ENCODE measurements at regions of chr22 and their contacts with region 1.

Region 1: DNA sequence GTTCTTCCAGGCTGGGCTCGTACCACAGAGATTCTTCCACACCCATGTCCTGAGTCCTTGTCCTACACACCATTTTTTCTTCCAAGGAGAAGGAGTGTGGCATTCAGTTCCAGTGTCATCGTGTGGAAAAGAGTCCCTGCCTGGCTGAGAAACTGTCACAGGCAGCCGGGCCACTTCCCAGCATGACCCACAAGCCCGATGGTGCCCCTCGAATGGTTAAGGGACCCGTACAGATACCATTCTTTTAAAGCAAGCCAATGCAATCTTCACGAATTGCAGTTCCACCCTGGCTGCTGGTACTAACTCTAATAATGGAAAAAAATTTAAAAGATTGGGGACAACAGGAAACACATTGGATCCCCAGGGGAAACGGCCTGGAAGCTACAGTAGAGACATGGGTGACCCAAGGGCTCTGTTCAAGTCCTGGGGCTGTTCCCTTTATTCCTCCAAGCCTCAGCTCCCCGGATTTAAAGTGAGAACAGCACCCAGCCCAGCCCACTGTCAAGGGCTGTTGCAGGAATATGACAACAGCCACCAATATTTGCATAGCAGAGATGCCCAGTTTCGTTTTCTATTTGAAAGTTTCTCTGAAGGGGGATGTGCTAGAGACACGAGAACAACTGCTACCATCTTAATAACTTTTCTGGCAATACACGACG is 80.9 kb upstream of the WNT7B start:
- DNase-seq: peak; percentile 87
- H3K4me3 Mint-ChIP-seq: peak overlapping the region; percentile 57
- H3K27ac Mint-ChIP-seq: peak overlapping the region; percentile 73
- H3K4me1 Mint-ChIP-seq: peaks cover 30% of the 10 kb centered on the region
- H3K27me3 Mint-ChIP-seq: no peaks in the 10 kb centered on the region

Region 2: DNA sequence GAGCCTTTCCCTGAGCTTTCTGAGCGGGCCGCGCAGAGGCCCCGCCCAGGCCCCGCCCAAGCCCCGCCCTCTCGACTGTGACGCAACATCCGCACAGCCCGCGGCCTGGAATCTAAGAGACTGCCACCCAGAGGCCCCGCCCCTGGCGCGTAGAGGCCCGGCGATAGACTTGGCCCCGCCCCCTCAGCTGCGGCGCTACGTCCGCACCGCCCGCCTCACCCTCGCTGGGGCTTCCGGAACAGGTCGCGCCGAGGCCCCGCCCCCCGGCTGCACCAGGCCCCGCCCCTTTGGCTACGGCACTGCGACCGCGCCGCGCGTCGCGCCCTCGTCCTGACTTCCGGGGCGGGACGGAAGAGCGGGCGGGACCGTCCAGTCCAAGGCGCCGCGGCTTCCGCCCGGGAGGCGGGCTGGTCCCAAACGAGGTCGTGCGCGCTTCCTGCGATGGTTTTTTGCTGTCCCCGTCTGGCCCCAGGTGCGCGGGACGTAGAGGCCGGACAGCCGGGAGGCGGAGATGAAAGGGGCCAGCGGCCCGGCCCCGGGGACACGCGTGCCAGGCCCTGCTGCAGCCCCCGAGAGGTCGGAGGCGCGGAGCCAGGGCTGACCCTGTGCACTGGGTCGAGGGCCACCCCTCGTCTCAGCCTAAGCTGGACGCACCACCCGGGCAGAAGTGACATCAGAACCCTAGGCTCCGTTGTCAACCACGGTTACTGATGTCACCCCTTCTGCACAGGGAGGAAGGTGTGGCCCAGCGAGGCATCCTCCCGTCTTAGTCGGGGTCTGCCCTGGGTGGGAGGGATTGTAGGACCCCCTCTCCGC is 21.9 kb before region 1 on chr22:
- intact Hi-C with region 1: loop called (anchors 2 kb)
- DNase-seq: peak; percentile 100
- H3K4me3 Mint-ChIP-seq: peak overlapping the region; percentile 84
- H3K27ac Mint-ChIP-seq: peak overlapping the region; percentile 91
- H3K4me1 Mint-ChIP-seq: peaks cover 13% of the 10 kb centered on the region
- H3K27me3 Mint-ChIP-seq: no peaks in the 10 kb centered on the region

Region 3: DNA sequence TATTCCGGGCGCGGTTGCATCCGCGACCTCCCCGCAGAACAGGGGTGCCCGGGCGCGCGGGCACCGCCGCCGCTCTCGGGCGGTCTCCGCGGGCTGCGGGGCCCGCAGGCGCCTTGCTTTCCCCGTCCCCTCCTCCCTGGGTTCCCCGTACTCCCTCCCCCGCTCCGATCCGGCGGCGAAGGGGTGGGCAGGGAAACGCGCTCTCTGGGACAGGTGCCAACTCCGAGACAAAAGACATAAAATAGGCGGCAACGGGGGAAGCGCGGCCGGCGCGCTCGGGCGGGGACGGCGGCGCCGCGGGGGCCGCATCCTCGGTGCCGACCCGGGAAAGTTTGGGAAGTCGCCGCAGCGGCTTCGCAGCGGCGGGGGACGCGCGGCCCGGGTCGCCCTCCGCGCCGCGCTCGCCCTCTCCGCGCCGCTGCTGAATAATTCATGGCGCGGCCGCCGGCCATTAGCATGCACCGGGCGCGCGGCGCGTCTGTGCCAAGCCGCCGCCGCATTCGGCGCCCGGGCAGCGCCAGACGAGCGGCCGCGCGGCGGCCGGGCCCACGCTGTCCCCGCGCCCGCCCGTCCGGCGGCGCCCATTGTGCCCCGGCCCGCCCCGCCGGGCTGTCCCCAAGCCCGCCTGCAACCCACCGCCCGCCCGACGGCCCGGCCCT is 13.7 kb after region 1 on chr22:
- intact Hi-C with region 1: loop called (anchors 1 kb)
- DNase-seq: peak; percentile 83
- H3K4me3 Mint-ChIP-seq: peak overlapping the region; percentile 79
- H3K27ac Mint-ChIP-seq: peak overlapping the region; percentile 89
- H3K4me1 Mint-ChIP-seq: peaks cover 27% of the 10 kb centered on the region
- H3K27me3 Mint-ChIP-seq: no peaks in the 10 kb centered on the region

Measured in activated CD4-positive, alpha-beta T cell treated with anti-CD3 and anti-CD28 coated beads, Interleukin-2, amount 10 ng/mL, durations not matched to agents 24 days and 14 days (primary cell).